GM10248 (cell line): ENCODE measurements at regions of chr9 and their contacts with region 1.

Region 1: DNA sequence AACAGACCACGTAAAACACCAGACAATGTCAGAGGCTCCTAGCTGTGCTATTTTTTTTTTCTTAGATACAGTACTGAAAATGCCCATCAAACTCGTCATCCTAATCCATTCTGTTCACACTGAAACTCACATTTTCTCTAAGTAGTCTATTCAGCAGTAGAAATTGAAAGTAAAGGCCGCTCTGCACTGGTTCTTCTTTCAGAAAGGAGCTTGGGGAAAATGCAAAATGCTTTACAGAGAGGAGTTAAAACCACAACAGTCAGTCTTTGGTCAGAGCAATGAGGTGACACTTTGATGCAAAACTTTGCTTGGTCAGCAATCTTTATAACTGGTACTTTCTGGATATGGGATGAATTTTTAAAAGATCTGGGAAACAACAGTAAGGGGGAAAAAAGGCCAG is 43.8 kb upstream of the SUSD1 start:
- DNase-seq: peak; percentile 54
- CTCF ChIP-seq: no peak

Region 2: GRCh38 chr9:111965566-111966019 is 253.3 kb before region 1 on chr9:
- CTCF ChIA-PET with region 1: no interaction called
- POLR2A ChIA-PET with region 1: no interaction called
- DNase-seq: peak; percentile 71
- CTCF ChIP-seq: no peak

Region 3: GRCh38 chr9:112233768-112234167 is 14.9 kb after region 1 on chr9:
- CTCF ChIA-PET with region 1: interaction called, 10 read pairs
- POLR2A ChIA-PET with region 1: no interaction called
- DNase-seq: no peak
- CTCF ChIP-seq: no peak